Activated CD8-positive, alpha-beta T cell treated with anti-CD3 and anti-CD28 coated beads, Interleukin-2, amount 10 ng/mL, durations not matched to agents 7 days and 5 days (primary cell): ENCODE measurements at regions of chr19 and their contacts with region 1.

Region 1: DNA sequence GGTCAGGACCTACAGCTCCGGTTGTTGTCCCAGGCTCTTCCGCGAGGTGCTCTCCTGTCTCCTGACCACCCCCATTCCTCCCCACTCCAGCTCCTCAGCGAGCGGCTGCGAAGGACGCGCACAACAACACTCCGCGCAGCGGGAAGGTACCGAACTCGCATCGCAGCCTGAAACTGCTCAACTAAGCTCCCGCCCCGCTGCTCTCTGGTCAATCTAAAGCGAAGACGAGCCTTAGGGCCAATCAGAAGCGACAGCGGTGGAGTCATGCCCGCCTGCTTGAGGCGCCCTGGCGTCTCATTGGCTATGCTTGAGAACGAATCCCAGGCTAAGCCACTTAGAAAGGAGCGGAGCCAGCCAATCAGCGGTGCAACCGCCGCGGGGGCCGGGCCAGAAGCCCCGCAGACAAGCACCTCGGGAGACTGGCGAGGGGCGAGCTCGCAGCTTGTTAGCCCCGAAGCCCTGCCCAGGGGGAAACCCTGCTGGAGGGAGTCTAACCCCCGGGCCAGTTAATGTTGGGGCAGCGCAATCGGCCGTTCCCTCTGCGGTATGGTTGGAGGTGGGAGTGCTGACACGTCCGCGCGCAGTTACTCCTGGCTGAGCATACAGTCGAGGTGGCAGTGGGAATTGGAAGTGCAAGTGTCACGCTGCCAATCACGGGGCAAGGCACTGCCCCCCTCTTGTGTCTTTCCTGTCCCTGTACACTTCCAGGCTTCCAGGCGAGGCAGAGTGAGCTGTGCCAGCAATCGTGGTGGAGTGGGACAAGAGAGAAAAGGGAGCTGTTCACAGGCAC is 1.9 kb upstream of the ZBTB32 start:
- DNase-seq: peak; percentile 98
- ATAC-seq: peak; percentile 100
- H3K4me3 Mint-ChIP-seq: peak overlapping the region; percentile 92
- H3K27ac Mint-ChIP-seq: peak overlapping the region; percentile 97
- H3K4me1 Mint-ChIP-seq: peaks cover 15% of the 10 kb centered on the region
- H3K27me3 Mint-ChIP-seq: no peaks in the 10 kb centered on the region

Region 2: GRCh38 chr19:35569281-35569781 is 133.1 kb before region 1 on chr19:
- CTCF ChIA-PET with region 1: no interaction called
- POLR2A ChIA-PET with region 1: no interaction called
- DNase-seq: no peak
- ATAC-seq: no peak
- H3K4me3 Mint-ChIP-seq: no peak overlapping the region
- H3K27ac Mint-ChIP-seq: no peak overlapping the region
- H3K4me1 Mint-ChIP-seq: peaks cover 2% of the 10 kb centered on the region
- H3K27me3 Mint-ChIP-seq: peaks cover 18% of the 10 kb centered on the region

Region 3: GRCh38 chr19:35596366-35596999 is 105.9 kb before region 1 on chr19:
- CTCF ChIA-PET with region 1: no interaction called
- POLR2A ChIA-PET with region 1: no interaction called
- DNase-seq: peak; percentile 35
- ATAC-seq: peak; percentile 84
- H3K4me3 Mint-ChIP-seq: no peak overlapping the region
- H3K27ac Mint-ChIP-seq: peak overlapping the region; percentile 53
- H3K4me1 Mint-ChIP-seq: peaks cover 9% of the 10 kb centered on the region
- H3K27me3 Mint-ChIP-seq: peaks cover 15% of the 10 kb centered on the region

Region 4: DNA sequence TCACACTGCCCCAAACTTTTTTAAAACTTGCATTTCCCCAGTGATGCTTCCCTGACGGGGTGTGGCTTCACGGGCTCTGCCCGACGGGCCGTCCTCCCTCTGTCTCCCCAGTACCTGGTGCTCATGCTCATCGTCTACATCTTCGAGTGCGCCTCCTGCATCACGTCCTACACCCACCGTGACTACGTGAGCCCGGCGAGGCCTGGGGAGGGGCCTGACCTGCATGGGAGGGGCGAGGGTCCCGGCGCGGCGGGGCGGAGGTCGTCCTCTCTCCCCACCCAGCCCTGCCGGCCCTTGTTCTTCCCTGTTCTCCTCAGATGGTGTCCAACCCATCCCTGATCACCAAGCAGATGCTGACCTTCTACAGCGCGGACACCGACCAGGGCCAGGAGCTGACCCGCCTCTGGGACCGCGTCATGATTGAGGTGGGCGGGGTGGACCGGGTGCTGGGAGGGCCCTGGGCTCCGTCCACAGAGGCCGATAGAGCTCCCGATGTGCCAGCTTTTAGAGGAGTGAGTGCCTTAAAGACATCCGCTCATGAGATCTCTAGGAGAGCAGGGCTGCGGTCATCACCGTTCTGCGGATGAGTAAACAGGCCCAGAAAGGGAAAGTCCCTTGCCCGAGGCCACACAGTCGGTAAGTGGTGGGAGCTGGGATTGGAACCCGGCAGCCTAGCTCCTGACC is 29.2 kb before region 1 on chr19:
- CTCF ChIA-PET with region 1: no interaction called
- POLR2A ChIA-PET with region 1: no interaction called
- DNase-seq: peak; percentile 66
- ATAC-seq: peak; percentile 83
- H3K4me3 Mint-ChIP-seq: peak overlapping the region; percentile 73
- H3K27ac Mint-ChIP-seq: peak overlapping the region; percentile 60
- H3K4me1 Mint-ChIP-seq: peaks cover 7% of the 10 kb centered on the region
- H3K27me3 Mint-ChIP-seq: peaks cover 27% of the 10 kb centered on the region

Region 5: GRCh38 chr19:35716801-35717666 is 14.6 kb after region 1 on chr19:
- CTCF ChIA-PET with region 1: interaction called, 266 read pairs
- POLR2A ChIA-PET with region 1: interaction called, 113 read pairs
- DNase-seq: peak; percentile 97
- ATAC-seq: peak; percentile 77
- H3K4me3 Mint-ChIP-seq: peak overlapping the region; percentile 83
- H3K27ac Mint-ChIP-seq: peak overlapping the region; percentile 89
- H3K4me1 Mint-ChIP-seq: peaks cover 65% of the 10 kb centered on the region
- H3K27me3 Mint-ChIP-seq: no peaks in the 10 kb centered on the region